ENCODE measurements at regions of chr13 and their contacts with region 1.

Region 1: GRCh38 chr13:20713751-20714150 is 10.3 kb downstream of the IL17D start:
- DNase-seq: no peak
- H3K4me3 ChIP-seq: no peak overlapping the region
- H3K27ac ChIP-seq: no peak overlapping the region
- H3K4me1 ChIP-seq: no peaks in the 10 kb centered on the region
- H3K27me3 ChIP-seq: no peaks in the 10 kb centered on the region
- CTCF ChIP-seq: no peak
- POLR2A ChIP-seq: no peak

Region 2: DNA sequence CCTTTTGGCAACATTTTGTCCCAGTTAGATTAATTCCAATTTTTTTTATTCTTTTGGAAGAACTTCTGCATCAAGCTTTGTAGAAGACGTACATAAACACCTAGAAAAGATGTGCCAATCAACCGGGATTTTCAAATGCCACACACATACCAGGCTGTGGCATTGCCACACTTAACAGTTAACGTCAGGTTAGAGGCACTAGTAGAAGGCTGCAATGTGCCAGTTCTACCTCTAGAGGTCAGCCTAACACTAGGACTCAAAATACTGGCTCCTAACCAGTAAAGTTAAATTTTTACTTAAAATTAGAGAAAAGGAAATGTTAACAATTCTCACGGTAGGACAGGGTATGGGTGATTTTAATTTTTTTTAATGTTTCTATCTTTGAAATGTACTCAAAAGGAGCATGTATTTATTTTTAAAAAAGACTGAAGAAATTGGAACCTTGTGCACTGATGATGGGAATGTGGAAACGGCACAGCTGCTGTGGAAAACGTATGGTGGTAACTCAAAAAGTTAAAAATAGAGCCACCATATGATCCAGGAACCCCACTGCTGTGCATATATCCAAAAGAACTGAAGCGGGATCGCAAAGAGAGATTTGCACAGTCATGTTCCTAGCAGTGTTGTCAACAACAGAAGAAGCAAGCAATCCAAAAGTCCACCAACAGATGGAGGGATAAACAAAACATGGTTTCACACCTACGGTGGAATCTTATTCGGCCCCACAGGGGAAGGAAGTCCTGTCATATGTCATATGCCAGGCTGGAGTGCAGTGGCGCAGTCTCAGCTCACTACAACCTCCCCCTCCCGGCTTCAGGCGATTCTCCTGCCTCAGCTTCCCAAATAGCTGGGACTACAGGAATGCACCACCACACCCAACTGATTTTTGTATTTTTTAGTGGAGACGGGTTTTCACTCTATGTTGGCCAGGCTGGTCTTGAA is 218.4 kb before region 1 on chr13:
- intact Hi-C with region 1: loop called (anchors 10 kb)
- DNase-seq: peak; percentile 67
- H3K4me3 ChIP-seq: no peak overlapping the region
- H3K27ac ChIP-seq: no peak overlapping the region
- H3K4me1 ChIP-seq: no peaks in the 10 kb centered on the region
- H3K27me3 ChIP-seq: no peaks in the 10 kb centered on the region
- CTCF ChIP-seq: peak; percentile 81 to 91 (median 88)
- POLR2A ChIP-seq: no peak

Region 3: DNA sequence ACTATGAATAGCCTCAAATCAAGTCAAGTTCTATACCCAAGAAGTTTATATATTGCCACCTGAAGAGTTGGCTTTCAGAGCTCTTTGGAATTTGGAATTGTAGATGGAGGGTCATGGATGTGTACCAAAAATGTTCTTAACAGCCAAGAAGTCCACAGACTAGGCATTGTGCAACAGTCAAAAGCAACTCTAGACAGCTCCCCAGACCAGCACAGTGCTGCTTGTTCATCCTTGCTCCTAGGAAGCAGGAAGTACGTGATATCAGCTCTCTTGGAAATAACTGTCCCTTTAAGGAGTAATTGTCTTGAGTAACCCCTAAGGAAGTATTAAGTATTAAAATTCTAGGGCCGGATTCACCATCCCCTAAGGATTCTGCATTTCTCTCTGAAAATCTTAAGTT is 41.0 kb before region 1 on chr13:
- intact Hi-C with region 1: no loop called
- DNase-seq: no peak
- H3K4me3 ChIP-seq: no peak overlapping the region
- H3K27ac ChIP-seq: no peak overlapping the region
- H3K4me1 ChIP-seq: no peaks in the 10 kb centered on the region
- H3K27me3 ChIP-seq: no peaks in the 10 kb centered on the region
- CTCF ChIP-seq: no peak
- POLR2A ChIP-seq: no peak

Region 4: GRCh38 chr13:20828539-20829364 is 115.0 kb after region 1 on chr13:
- intact Hi-C with region 1: loop called (anchors 2 kb)
- DNase-seq: no peak
- H3K4me3 ChIP-seq: no peak overlapping the region
- H3K27ac ChIP-seq: no peak overlapping the region
- H3K4me1 ChIP-seq: no peaks in the 10 kb centered on the region
- H3K27me3 ChIP-seq: no peaks in the 10 kb centered on the region
- CTCF ChIP-seq: peak; percentile 34 to 75 (median 68)
- POLR2A ChIP-seq: no peak

Region 5: GRCh38 chr13:20924758-20925394 is 211.1 kb after region 1 on chr13:
- intact Hi-C with region 1: loop called (anchors 5 kb)
- DNase-seq: peak; percentile 77
- H3K4me3 ChIP-seq: no peak overlapping the region
- H3K27ac ChIP-seq: no peak overlapping the region
- H3K4me1 ChIP-seq: no peaks in the 10 kb centered on the region
- H3K27me3 ChIP-seq: no peaks in the 10 kb centered on the region
- CTCF ChIP-seq: peak; percentile 22 to 63 (median 57)
- POLR2A ChIP-seq: no peak

Measured in prostate gland (tissue), 2 donors.